K562 (cell line): ENCODE measurements at regions of chr2 and their contacts with region 1.

Region 1: DNA sequence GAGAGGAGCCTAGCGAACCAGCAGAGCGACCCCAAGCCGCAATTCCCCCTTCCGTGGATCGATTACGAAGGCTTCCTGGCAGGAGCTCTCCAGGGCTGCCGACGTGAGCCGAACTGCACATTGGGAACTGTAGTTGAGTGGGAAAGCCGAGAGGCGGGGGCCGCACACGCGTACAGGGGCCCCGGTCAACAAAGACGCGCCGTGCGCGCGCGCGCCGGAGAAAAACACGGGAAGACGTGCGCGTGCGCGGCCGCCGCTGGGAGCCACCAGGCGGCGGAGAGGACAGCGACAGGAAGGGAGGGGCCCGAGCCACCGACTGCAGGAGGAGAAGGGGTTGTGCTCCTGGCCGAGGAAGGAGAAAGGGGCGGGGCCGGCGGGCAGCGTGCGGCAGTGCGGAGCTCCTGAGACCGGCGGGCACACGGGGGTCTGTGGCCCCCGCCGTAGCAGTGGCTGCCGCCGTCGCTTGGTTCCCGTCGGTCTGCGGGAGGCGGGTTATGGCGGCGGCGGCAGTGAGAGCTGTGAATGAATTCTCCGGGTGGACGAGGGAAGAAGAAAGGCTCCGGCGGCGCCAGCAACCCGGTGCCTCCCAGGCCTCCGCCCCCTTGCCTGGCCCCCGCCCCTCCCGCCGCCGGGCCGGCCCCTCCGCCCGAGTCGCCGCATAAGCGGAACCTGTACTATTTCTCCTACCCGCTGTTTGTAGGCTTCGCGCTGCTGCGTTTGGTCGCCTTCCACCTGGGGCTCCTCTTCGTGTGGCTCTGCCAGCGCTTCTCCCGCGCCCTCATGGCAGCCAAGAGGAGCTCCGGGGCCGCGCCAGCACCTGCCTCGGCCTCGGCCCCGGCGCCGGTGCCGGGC is at the start of gene SPAST:
- DNase-seq: peak; percentile 96 to 98 (median 96)
- ATAC-seq: peak; percentile 94
- H3K4me3 ChIP-seq: peak within 1 kb of the TSS; percentile 96
- H3K27ac ChIP-seq: peak within 1 kb of the TSS; percentile 89
- H3K4me1 ChIP-seq: peaks cover 3 to 38% of the 10 kb centered on the region in 2 experiments; a peak in 4 of 5 replicates
- H3K27me3 ChIP-seq: no peaks in the 10 kb centered on the region
- CTCF ChIP-seq: peak; percentile 46 to 69 (median 53); a peak in 5 of 6 replicates
- EP300 ChIP-seq: peak; percentile 14; the same call in 1 of the 2 replicates
- POLR2A ChIP-seq: peak; percentile 81
- RAD21 ChIP-seq: peak in 1 of 2 experiments; percentile 20; a peak in 1 of 4 replicates
- polyA plus RNA-seq, gene SPAST: 7.4 to 12.6 TPM

Region 2: DNA sequence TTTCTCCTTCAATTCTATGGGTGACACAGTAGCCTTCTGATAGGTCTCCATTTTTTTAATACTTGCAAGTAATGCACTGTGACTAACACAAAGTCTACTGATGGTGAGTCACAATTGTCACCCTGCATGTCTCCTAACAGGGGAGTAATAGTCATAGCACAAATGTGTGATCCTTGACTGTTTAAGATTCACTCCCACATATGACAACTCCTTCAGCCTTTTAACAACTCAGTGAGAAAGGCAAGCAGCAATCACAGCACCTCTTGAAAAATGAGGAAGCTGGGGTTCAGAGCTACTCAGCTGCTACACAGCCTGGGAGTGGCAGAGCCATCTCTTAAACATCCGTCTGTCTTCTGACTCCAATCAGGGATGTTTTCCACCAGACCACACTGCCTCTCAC is 765.8 kb before region 1 on chr2:
- CTCF ChIA-PET with region 1: no interaction called
- POLR2A ChIA-PET with region 1: no interaction called
- in situ Hi-C with region 1: no loop called
- intact Hi-C with region 1: no loop called
- DNase-seq: no peak
- ATAC-seq: no peak
- H3K4me3 ChIP-seq: no peak overlapping the region
- H3K27ac ChIP-seq: no peak overlapping the region
- H3K4me1 ChIP-seq: no peaks in the 10 kb centered on the region
- H3K27me3 ChIP-seq: peaks cover 0 to 5% of the 10 kb centered on the region in 2 experiments; a peak in 1 of 5 replicates
- CTCF ChIP-seq: no peak
- EP300 ChIP-seq: no peak
- POLR2A ChIP-seq: no peak
- RAD21 ChIP-seq: no peak

Region 3: GRCh38 chr2:32010670-32011484 is 52.7 kb before region 1 on chr2 and contains the start of gene MEMO1:
- CTCF ChIA-PET with region 1: no interaction called
- POLR2A ChIA-PET with region 1: no interaction called
- in situ Hi-C with region 1: no loop called
- intact Hi-C with region 1: loop called (anchors 2 kb)
- DNase-seq: peak; percentile 93 to 96 (median 94)
- ATAC-seq: peak; percentile 87
- H3K4me3 ChIP-seq: peak within 1 kb of the TSS; percentile 92
- H3K27ac ChIP-seq: peak within 1 kb of the TSS; percentile 95
- H3K4me1 ChIP-seq: peaks cover 18 to 31% of the 10 kb centered on the region in 2 experiments
- H3K27me3 ChIP-seq: no peaks in the 10 kb centered on the region
- CTCF ChIP-seq: peak in 2 of 3 experiments; percentile 2 to 6; a peak in 2 of 6 replicates
- EP300 ChIP-seq: no peak
- POLR2A ChIP-seq: peak; percentile 91
- RAD21 ChIP-seq: peak; percentile 13 to 19; a peak in 1 of 4 replicates
- polyA plus RNA-seq, gene MEMO1: 81.6 to 87.7 TPM

Region 4: GRCh38 chr2:32039447-32040219 is 23.9 kb before region 1 on chr2 and contains the start of gene DPY30:
- CTCF ChIA-PET with region 1: no interaction called
- POLR2A ChIA-PET with region 1: interaction called, 26 read pairs
- in situ Hi-C with region 1: no loop called
- intact Hi-C with region 1: no loop called
- DNase-seq: peak; percentile 89 to 97 (median 90)
- ATAC-seq: peak; percentile 93
- H3K4me3 ChIP-seq: peak within 1 kb of the TSS; percentile 73
- H3K27ac ChIP-seq: peak within 1 kb of the TSS; percentile 63
- H3K4me1 ChIP-seq: peaks cover 8 to 15% of the 10 kb centered on the region in 2 experiments; a peak in 2 of 5 replicates
- H3K27me3 ChIP-seq: no peaks in the 10 kb centered on the region
- CTCF ChIP-seq: 0 out of 6 replicates have a peak, but pooled peaks of 2 of the 3 experiments have one; percentile 3 to 19
- EP300 ChIP-seq: no peak
- POLR2A ChIP-seq: peak; percentile 98
- RAD21 ChIP-seq: 0 out of 4 replicates have a peak, but pooled peaks of 1 of the 2 experiments have one; percentile 17
- polyA plus RNA-seq, gene DPY30: 375 to 402 TPM

Region 5: DNA sequence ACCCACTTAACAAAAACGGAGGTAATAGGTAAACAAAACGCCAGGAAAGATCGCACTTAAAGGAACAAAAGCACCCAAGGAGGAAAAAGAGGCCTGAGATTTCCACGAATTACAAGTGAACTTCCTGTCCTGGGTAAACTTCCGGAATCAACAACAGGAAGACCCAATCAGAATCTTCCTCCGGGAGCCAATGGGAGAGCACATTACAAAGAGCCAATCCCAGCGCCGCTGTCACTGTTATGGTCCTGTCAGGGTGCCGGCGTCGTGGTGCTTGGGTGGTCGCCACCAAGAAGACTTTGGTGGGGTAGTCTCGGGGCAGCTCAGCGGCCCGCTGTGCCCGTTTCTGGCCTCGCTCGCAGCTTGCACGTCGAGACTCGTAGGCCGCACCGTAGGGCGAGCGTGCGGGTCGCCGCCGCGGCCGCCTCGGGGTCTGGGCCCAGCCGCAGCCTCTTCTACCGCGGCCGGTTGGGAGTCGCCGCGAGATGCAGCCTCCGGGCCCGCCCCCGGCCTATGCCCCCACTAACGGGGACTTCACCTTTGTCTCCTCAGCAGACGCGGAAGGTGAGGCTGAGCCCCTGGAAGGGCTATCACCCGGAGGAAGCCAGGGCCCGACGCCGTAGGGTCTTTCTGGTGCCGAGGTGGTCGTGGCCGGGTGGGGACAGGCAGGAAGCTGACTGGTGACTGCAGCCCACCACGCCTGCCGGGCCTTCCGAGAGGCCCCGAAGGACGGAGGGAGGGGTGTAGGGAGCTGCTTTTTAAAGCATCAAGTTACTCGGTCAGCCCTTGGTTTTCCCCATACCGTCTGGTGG is 214.3 kb after region 1 on chr2 and contains the start of gene YIPF4:
- CTCF ChIA-PET with region 1: no interaction called
- POLR2A ChIA-PET with region 1: no interaction called
- in situ Hi-C with region 1: no loop called
- intact Hi-C with region 1: loop called (anchors 5 kb)
- DNase-seq: peak; percentile 94 to 100 (median 99)
- ATAC-seq: peak; percentile 97
- H3K4me3 ChIP-seq: peak within 1 kb of the TSS; percentile 98
- H3K27ac ChIP-seq: peak within 1 kb of the TSS; percentile 87
- H3K4me1 ChIP-seq: peaks cover 11 to 14% of the 10 kb centered on the region in 2 experiments; a peak in 4 of 5 replicates
- H3K27me3 ChIP-seq: no peaks in the 10 kb centered on the region
- CTCF ChIP-seq: no peak
- EP300 ChIP-seq: 0 out of 2 replicates have a peak, but pooled peaks have one; percentile 4
- POLR2A ChIP-seq: peak; percentile 81
- RAD21 ChIP-seq: no peak
- polyA plus RNA-seq, gene YIPF4: 4.9 to 7.7 TPM